ENCODE measurements at regions of chr12 and their contacts with region 1.

Region 1: DNA sequence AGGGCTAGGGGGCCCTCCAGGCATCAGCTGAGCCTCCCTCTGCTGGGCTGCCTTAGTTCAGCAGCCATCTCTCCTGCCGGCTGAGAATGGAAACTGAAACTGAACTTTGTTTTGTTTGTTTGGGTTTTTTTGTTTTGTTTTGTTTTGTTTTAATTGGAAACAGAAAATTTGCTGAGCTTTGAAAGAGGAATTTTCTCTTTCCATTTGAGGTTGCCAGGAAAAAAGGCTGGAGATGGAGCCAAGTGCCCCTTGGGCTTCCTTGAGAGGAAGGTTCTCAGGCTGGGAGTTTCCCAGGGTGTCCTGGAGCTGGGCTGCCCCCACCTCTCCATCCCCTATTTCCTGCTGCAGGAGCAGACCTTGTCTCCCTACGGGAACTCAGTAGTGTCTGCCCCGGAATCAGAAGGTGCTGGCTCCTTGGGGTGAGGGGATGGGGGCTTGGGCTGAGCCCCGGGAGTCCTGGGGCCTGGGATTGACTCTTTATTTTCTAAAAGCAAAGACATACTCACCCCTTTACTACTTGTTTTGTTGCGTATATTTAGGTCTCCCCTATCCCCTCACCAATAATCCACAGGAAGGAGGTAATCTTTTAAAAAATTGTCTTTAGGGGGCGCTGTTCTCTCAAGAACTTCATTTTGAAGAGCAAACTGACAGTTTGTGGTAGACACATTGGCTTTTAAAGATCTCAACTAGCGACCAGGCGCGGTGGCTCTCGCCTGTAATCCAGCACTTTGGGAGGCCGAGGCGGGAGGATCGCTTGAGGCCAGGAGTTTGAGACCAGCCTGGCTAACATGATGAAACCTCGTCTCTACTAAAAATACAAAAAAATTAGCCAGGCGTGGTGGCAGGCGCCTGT is 21.3 kb upstream of the OASL start:
- DNase-seq: no peak
- H3K4me3 ChIP-seq: peak overlapping the region in 1 of 3 experiments; percentile 15
- H3K27ac ChIP-seq: no peak overlapping the region
- H3K4me1 ChIP-seq: no peaks in the 10 kb centered on the region
- H3K27me3 ChIP-seq: no peaks in the 10 kb centered on the region
- CTCF ChIP-seq: peak; percentile 27 to 45

Region 2: GRCh38 chr12:120799243-120800045 is 260.9 kb before region 1 on chr12:
- CTCF ChIA-PET with region 1: no interaction called
- dilution Hi-C with region 1: no loop called
- in situ Hi-C with region 1: no loop called
- intact Hi-C with region 1: no loop called
- DNase-seq: no peak
- H3K4me3 ChIP-seq: no peak overlapping the region
- H3K27ac ChIP-seq: no peak overlapping the region
- H3K4me1 ChIP-seq: no peaks in the 10 kb centered on the region
- H3K27me3 ChIP-seq: no peaks in the 10 kb centered on the region
- CTCF ChIP-seq: no peak

Region 3: DNA sequence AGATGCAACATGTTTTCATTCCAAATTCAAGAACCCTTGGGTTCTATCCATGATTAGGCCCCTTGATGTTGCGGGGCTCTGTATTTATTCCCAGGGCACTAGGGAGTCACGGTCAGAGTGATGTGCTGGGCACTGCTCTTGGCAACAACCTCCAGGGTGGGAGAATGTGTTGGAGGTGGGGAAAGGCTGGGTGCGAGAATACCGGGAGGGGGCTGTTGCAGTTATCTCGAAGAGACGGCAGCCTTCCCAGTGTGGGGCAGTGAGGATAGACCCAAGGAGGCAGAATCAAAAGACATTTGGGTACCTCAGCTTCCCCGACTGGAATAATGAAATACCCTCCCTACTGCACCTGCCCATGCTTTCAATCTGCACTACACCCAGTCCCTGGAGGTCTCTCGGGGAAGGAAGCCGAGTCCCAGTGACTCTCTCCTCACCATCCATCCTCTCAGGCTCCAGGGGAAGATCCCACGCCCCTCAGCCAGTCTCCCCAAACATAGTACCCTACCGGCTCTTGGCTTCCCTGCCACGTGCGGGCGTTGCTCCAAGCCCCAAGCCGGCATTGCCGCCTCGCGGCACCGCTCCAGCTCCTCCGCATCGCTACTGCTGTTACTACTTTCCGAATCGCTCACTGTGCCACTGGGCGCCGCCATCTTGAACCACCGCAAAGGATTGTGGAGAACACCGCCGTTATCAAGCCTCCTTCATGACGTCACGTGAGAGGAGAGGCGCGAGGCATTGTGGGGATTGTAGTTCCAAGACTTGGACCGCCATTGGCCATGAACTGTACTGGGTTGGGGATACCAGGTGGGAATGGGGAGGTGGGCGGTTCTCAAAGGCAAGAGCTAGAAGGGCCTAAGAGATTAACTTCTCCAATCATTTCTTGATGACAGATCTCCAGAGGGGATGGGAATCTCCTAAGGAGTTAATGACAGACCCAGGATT is 44.3 kb before region 1 on chr12 and contains the start of gene C12orf43:
- CTCF ChIA-PET with region 1: no interaction called
- dilution Hi-C with region 1: loop called (anchors 5 kb)
- in situ Hi-C with region 1: no loop called
- intact Hi-C with region 1: no loop called
- DNase-seq: peak; percentile 84
- H3K4me3 ChIP-seq: peak within 1 kb of the TSS; percentile 81 to 87 (median 82)
- H3K27ac ChIP-seq: peak within 1 kb of the TSS; percentile 64
- H3K4me1 ChIP-seq: peaks cover 9% of the 10 kb centered on the region
- H3K27me3 ChIP-seq: no peaks in the 10 kb centered on the region
- CTCF ChIP-seq: no peak
- total RNA-seq, gene C12orf43: 12.0 to 16.9 TPM

Region 4: DNA sequence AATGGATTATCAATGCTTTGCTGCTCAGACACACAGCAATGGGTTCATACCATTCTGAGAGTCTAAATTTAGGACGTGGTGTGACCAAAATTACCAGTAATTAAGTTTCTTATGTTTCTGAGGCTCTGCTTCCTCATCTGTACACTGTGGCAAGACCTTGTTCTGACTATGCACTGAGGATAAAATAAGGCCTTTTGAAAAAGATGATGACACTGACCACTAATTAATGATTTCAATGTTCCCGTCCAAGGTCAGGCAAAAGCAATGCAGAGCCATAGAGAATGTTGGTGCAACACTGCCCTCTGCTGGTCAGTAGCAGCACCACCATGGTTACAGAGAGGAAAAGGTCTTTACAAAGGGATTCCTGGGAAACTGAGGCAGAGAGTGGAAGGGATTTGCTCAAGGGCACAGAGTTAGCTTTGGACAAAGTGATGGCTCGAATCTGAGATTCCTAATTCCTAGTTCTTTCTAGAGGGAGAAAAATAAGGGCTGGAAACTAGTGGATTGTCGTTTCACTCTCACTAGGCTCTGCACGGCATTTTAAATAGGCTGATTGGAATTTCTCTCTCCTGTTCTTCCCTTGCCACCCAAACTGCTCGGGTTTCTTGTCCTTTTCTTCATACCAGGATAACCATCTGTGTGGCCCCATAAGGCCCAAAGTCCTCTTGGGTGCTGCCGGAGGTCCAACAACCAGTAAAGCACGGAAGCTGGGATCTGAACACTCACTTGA is 50.0 kb after region 1 on chr12:
- CTCF ChIA-PET with region 1: no interaction called
- dilution Hi-C with region 1: no loop called
- in situ Hi-C with region 1: no loop called
- intact Hi-C with region 1: loop called (anchors 2 kb)
- DNase-seq: peak; percentile 38
- H3K4me3 ChIP-seq: no peak overlapping the region
- H3K27ac ChIP-seq: no peak overlapping the region
- H3K4me1 ChIP-seq: no peaks in the 10 kb centered on the region
- H3K27me3 ChIP-seq: no peaks in the 10 kb centered on the region
- CTCF ChIP-seq: peak; percentile 92 to 98

Region 5: DNA sequence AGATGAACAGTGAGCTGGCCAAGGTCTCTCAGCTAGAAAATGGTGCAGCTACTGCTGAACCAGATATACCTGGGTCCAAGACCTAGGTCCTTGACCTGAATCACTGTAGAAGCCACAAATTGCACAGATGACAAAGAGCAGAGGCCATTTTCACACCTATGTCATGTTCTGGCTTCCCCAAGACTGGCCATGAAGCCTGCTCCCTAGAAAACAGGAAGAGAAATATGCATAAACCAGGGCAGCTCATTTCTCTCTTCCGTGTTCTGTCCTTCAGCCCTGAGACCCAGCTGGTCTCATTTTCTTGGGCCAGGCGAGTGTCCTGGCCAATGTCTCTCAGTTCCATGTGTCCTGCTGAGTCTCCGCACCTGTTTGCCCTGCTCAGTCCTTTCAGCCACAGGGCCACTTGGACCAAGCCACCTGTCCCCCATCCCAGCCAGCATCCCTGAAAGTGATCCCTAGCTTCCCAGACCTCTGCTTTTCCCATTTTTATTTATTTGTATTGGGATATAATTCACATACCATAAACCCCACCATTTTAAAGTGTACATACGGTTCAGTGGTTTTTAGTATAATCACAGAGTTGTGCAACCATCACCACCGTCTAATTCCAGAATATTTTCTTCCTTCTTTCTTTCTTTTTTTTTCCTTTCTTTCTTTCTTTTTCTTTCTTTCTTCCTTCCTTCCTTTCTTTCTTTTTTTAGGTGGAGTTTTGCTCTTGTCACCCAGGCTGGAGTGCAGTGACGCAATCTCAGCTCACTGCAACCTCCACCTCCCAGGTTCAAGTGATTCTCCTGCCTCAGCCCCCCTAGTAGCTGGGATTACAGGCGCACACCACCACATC is 99.3 kb after region 1 on chr12:
- CTCF ChIA-PET with region 1: no interaction called
- dilution Hi-C with region 1: loop called (anchors 5 kb)
- in situ Hi-C with region 1: no loop called
- intact Hi-C with region 1: no loop called
- DNase-seq: no peak
- H3K4me3 ChIP-seq: no peak overlapping the region
- H3K27ac ChIP-seq: no peak overlapping the region
- H3K4me1 ChIP-seq: no peaks in the 10 kb centered on the region
- H3K27me3 ChIP-seq: no peaks in the 10 kb centered on the region
- CTCF ChIP-seq: no peak

Region 6: DNA sequence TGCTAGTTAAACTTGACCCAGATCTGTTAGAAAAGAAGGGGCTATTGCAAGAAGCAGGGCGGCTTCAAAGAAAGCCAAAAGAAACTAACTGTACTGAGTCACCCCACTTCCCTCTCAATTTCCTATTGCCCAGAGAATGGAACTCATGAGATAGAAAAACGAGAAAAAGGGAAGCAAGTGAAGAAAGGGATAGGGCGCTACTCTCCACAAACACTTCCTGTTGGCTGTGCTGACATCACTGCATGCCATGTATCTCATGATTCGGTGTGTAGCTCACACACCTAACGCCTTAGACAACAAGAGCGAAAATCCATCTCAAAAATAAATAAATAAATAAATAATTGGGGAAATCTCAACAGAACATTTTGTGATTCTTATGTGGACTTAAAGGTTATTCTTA is 136.5 kb after region 1 on chr12:
- CTCF ChIA-PET with region 1: interaction called, 10 read pairs
- dilution Hi-C with region 1: no loop called
- in situ Hi-C with region 1: no loop called
- intact Hi-C with region 1: no loop called
- DNase-seq: no peak
- H3K4me3 ChIP-seq: no peak overlapping the region
- H3K27ac ChIP-seq: no peak overlapping the region
- H3K4me1 ChIP-seq: no peaks in the 10 kb centered on the region
- H3K27me3 ChIP-seq: no peaks in the 10 kb centered on the region
- CTCF ChIP-seq: no peak

Region 7: GRCh38 chr12:121223292-121224285 is 163.2 kb after region 1 on chr12:
- CTCF ChIA-PET with region 1: no interaction called
- dilution Hi-C with region 1: no loop called
- in situ Hi-C with region 1: no loop called
- intact Hi-C with region 1: loop called (anchors 2 kb)
- DNase-seq: peak; percentile 12
- H3K4me3 ChIP-seq: no peak overlapping the region
- H3K27ac ChIP-seq: no peak overlapping the region
- H3K4me1 ChIP-seq: no peaks in the 10 kb centered on the region
- H3K27me3 ChIP-seq: no peaks in the 10 kb centered on the region
- CTCF ChIP-seq: peak; percentile 33 to 66

Region 8: DNA sequence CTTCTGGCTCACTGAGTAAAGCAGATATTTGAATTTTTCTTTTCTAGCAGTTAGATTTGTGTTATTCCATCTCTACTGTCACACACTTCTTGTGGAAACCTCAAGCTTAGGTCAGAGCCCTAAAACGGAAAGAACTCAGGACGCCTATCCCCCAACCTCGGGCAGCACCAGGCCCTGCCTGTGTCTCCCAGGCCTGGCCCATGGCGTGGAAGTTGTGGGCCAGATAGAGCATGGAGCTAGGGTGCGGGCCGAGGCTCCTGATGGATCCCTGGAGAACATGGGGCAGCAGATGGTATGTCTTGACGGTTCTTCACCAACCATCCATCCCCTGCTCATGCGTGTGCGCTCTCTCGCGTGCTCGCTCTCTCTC is 170.1 kb after region 1 on chr12:
- CTCF ChIA-PET with region 1: no interaction called
- dilution Hi-C with region 1: no loop called
- in situ Hi-C with region 1: no loop called
- intact Hi-C with region 1: loop called (anchors 2 kb)
- DNase-seq: no peak
- H3K4me3 ChIP-seq: no peak overlapping the region
- H3K27ac ChIP-seq: no peak overlapping the region
- H3K4me1 ChIP-seq: no peaks in the 10 kb centered on the region
- H3K27me3 ChIP-seq: no peaks in the 10 kb centered on the region
- CTCF ChIP-seq: no peak